Breast epithelium (tissue), 4 donors: ENCODE measurements at regions of chr7 and their contacts with region 1.

Region 1: GRCh38 chr7:108723381-108723814 is 153.7 kb downstream of the DNAJB9 start:
- DNase-seq: no peak
- H3K4me3 ChIP-seq: no peak overlapping the region
- H3K27ac ChIP-seq: no peak overlapping the region
- H3K4me1 ChIP-seq: no peaks in the 10 kb centered on the region
- H3K27me3 ChIP-seq: no peaks in the 10 kb centered on the region
- CTCF ChIP-seq: no peak
- POLR2A ChIP-seq: no peak

Region 2: GRCh38 chr7:110645060-110645459 is 1921.7 kb after region 1 on chr7:
- intact Hi-C with region 1: loop called (anchors 5 kb)
- DNase-seq: no peak
- H3K4me3 ChIP-seq: no peak overlapping the region
- H3K27ac ChIP-seq: no peak overlapping the region
- H3K4me1 ChIP-seq: no peaks in the 10 kb centered on the region
- H3K27me3 ChIP-seq: no peaks in the 10 kb centered on the region
- CTCF ChIP-seq: no peak
- POLR2A ChIP-seq: no peak